ENCODE measurements at regions of chr16 and their contacts with region 1.

Region 1: GRCh38 chr16:8998114-8998513 is 34.4 kb upstream of the USP7 start:
- DNase-seq: no peak

Region 2: DNA sequence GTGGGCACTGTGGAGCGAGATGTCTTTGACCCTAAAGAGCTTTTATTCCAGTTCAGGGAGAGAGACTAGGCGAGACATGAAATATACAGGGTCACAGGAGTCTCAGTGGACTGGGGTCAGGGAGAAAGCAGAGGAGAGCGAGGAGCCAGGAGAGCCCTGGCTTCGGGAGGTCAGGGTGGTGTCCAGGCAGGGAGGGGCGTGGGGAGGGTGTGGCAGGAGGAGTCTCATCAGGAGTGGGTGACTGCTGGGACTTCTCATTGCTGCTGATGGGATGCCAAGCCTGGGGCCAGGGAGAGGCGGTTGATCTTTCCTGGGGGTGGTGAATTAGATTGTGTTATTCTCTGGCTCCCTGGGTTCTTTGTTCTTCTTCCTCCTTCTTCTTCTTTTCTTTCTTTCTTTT is 12.0 kb before region 1 on chr16:
- CTCF ChIA-PET with region 1: no interaction called
- POLR2A ChIA-PET with region 1: no interaction called
- DNase-seq: no peak

Region 3: DNA sequence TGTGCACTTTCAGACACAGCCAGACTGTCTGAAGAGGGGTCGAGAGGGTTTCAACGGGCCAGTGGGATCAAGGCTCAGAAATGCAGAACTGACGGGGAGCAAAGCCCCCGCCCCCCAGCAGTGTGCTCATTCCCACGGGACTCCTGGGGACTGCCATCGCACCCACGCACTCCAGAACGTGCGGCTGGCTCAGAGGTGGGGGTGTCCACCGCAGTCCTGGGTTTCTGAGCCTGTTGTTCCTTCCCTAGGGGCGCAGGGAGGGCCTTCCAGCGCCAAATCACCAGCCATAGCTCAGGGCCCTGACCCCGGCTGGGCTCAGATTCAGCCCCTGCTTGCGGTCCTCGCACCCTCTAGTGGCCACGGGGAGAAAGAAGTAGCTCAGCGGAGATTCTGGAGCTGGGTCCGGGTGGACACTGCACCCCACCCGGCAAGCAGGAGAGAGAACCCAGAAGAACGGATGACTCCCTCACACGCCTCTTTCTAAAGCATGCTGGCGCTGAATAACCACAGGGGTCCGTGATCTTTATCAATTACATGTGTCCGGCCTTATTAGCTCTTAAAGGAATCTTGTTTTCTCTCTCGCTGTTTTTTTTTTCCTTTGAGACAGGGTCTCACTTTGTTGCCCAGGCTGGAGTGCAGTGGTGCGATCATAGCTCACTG is 10.6 kb after region 1 on chr16:
- CTCF ChIA-PET with region 1: interaction called, 14 read pairs
- POLR2A ChIA-PET with region 1: no interaction called
- DNase-seq: peak; percentile 88

Measured in HEK293T (cell line).